CD8-positive, alpha-beta memory T cell (primary cell): ENCODE measurements at regions of chr17 and their contacts with region 1.

Region 1: DNA sequence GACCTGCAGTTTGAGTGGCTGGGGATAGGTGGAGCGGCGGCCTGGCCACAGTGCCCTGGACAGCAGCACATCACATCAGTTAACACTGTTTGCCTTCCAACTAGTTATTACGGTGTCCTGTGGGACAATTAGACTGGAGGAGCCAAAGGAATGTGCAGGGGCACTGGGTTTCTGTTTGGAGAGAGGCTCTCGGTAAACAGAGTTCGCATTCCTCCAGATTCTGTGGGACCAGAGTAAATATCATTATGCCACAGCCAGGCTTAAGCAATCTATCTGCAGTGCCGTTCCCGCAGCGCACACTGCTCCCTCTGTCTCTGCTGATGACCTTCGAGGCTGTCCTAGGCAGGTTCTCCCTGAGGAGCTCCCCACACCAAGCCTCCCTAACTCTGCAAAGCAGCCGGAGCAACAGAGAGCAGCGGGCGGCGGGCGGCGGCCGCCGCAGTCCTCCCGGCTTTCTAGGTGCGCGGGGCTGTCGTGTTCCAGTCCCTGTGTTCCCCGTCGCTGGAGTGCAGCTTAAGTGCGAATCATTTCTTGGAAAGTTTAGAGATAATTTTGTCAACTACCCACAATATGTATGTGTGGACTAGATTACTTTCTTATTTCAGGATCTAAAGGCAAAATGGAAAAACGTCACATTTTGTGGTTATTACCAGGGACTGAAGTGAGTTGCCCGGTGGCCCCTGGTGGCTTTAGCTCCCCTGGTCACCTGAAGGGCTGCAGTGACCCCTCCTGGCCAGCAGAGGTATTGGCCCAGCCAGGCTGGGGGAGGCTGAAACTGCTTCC is 43.2 kb downstream of the PGS1 start:
- DNase-seq: peak; percentile 51 to 79 (median 63)
- H3K4me3 ChIP-seq: no peak overlapping the region
- H3K4me3 Mint-ChIP-seq: no peak overlapping the region
- H3K27ac ChIP-seq: no peak overlapping the region
- H3K27ac Mint-ChIP-seq: peak overlapping the region in 5 of 8 donors; percentile 17 to 63 (median 54)
- H3K4me1 ChIP-seq: peaks cover 11% of the 10 kb centered on the region
- H3K4me1 Mint-ChIP-seq: peaks cover 9 to 29% (median 13%) of the 10 kb centered on the region in 3 donors
- H3K27me3 ChIP-seq: no peaks in the 10 kb centered on the region
- H3K27me3 Mint-ChIP-seq: no peaks in the 10 kb centered on the region

Region 2: DNA sequence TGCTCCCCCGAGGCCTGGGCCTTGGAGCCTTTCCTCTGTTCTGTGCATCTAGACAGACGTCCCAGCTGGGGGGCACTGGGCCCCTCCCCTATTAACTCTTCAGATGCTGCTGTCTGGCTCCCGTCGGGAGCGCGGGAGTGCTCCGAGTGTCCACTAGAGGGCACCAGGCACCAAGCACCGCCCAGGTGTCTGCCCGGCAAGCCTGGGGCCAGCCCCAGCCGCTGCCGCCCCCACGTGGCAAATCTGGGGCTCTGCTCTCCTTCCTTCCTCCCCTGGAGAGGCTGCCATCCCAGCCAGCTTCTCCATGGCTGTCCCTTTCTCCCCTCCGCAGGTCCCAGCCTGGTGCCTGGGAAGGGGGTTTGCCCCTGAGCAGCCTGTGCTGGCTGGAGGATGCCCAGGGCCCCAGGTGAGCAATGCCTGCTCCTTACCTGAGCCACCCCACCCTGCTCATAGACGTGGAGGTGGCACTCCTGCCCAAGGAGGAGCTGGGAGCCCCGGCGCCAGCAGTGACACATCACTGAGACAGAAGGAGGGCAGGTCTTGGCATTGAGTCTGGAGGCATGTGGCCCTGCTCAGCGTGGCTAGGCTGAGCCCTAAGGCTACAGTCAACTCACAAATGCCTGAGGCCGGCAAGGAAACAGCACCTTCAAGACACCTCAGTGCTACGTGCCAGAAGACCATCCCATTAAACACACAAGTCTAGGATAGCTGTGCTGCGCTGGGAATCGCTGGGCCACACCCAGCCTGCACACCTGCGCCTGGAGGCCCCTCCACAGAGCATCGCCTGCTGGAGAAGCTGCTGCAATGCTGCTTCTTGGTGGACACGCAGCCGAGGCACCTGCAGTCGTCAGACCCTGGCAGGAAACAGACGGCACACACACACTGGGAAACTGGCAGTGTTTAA is 170.5 kb before region 1 on chr17:
- CTCF ChIA-PET with region 1: interaction called, 15 read pairs
- POLR2A ChIA-PET with region 1: no interaction called
- DNase-seq: peak; percentile 74 to 85 (median 77)
- H3K4me3 ChIP-seq: peak overlapping the region; percentile 77
- H3K4me3 Mint-ChIP-seq: peak overlapping the region; percentile 72 to 84 (median 80)
- H3K27ac ChIP-seq: peak overlapping the region; percentile 20
- H3K27ac Mint-ChIP-seq: peak overlapping the region; percentile 16 to 97 (median 94)
- H3K4me1 ChIP-seq: peaks cover 57% of the 10 kb centered on the region
- H3K4me1 Mint-ChIP-seq: peaks cover 33 to 53% (median 39%) of the 10 kb centered on the region in 3 donors
- H3K27me3 ChIP-seq: no peaks in the 10 kb centered on the region
- H3K27me3 Mint-ChIP-seq: peaks cover 0 to 2% of the 10 kb centered on the region in 2 donors

Region 3: DNA sequence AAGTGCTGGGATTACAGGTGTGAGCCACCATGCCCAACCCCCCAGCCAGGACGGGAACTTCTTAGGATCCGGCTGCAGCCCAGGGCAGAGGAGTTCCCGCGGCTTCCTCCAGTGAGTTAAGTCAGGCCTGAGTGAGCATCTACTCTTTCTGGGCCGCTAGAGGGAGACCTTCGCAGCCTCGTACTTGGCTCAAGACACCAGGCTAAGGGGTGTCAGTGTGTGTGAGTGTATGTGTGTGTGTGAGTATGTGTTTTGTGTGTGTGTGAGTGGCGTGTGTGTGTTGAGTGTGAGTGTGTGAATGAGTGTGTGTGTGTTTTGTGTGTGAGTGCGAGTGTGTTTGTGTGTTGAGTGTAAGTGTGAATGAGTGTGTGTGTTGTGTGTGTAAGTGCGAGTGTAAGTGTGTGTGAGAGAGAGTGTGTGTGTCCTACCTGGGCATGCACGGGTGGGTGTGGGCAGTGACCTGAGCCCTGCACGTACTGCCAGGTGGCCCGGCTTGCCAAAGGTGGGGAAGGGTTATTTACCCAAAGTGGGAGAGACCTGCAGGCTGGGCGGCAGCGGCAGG is 131.8 kb before region 1 on chr17:
- CTCF ChIA-PET with region 1: interaction called, 27 read pairs
- POLR2A ChIA-PET with region 1: no interaction called
- DNase-seq: peak; percentile 46 to 81 (median 67)
- H3K4me3 ChIP-seq: no peak overlapping the region
- H3K4me3 Mint-ChIP-seq: no peak overlapping the region
- H3K27ac ChIP-seq: no peak overlapping the region
- H3K27ac Mint-ChIP-seq: no peak overlapping the region
- H3K4me1 ChIP-seq: peaks cover 9% of the 10 kb centered on the region
- H3K4me1 Mint-ChIP-seq: no peaks in the 10 kb centered on the region
- H3K27me3 ChIP-seq: no peaks in the 10 kb centered on the region
- H3K27me3 Mint-ChIP-seq: no peaks in the 10 kb centered on the region

Region 4: GRCh38 chr17:78432226-78433012 is 10.7 kb after region 1 on chr17:
- CTCF ChIA-PET with region 1: interaction called, 10 read pairs
- POLR2A ChIA-PET with region 1: no interaction called
- DNase-seq: no peak
- H3K4me3 ChIP-seq: no peak overlapping the region
- H3K4me3 Mint-ChIP-seq: no peak overlapping the region
- H3K27ac ChIP-seq: no peak overlapping the region
- H3K27ac Mint-ChIP-seq: no peak overlapping the region
- H3K4me1 ChIP-seq: no peaks in the 10 kb centered on the region
- H3K4me1 Mint-ChIP-seq: no peaks in the 10 kb centered on the region
- H3K27me3 ChIP-seq: no peaks in the 10 kb centered on the region
- H3K27me3 Mint-ChIP-seq: no peaks in the 10 kb centered on the region

Region 5: DNA sequence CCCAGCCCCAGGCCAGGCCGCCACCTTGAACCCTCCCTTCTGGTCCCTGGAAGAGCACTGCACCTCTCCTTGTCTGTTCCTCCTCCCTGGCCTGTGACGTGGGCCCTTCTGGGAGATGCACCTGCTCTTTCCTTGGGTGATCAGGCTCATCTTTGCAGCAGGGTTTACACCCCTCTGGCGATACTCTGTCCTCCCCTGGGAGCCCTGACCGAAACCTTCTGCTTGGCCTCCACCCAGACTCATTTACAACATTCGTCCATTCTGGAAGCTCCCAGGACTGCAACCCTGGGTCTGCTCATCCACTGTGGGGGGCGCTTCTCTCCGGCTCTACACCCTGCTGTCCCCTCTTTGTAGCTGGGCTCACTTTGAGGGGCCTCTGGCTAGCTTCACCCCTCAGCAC is 30.1 kb after region 1 on chr17:
- CTCF ChIA-PET with region 1: no interaction called
- POLR2A ChIA-PET with region 1: no interaction called
- DNase-seq: no peak
- H3K4me3 ChIP-seq: no peak overlapping the region
- H3K4me3 Mint-ChIP-seq: no peak overlapping the region
- H3K27ac ChIP-seq: no peak overlapping the region
- H3K27ac Mint-ChIP-seq: no peak overlapping the region
- H3K4me1 ChIP-seq: no peaks in the 10 kb centered on the region
- H3K4me1 Mint-ChIP-seq: no peaks in the 10 kb centered on the region
- H3K27me3 ChIP-seq: no peaks in the 10 kb centered on the region
- H3K27me3 Mint-ChIP-seq: peaks cover 3% of the 10 kb centered on the region in 2 donors

Region 6: GRCh38 chr17:79019632-79020584 is 598.2 kb after region 1 on chr17:
- CTCF ChIA-PET with region 1: no interaction called
- POLR2A ChIA-PET with region 1: no interaction called
- DNase-seq: peak; percentile 20 to 65 (median 39)
- H3K4me3 ChIP-seq: no peak overlapping the region
- H3K4me3 Mint-ChIP-seq: peak overlapping the region in 1 of 7 donors; percentile 7
- H3K27ac ChIP-seq: no peak overlapping the region
- H3K27ac Mint-ChIP-seq: no peak overlapping the region
- H3K4me1 ChIP-seq: peaks cover 4% of the 10 kb centered on the region
- H3K4me1 Mint-ChIP-seq: peaks cover 7 to 9% (median 9%) of the 10 kb centered on the region in 3 donors
- H3K27me3 ChIP-seq: peaks cover 11% of the 10 kb centered on the region
- H3K27me3 Mint-ChIP-seq: peaks cover 10 to 22% of the 10 kb centered on the region in 2 donors